Thyroid gland (tissue), 4 donors: ENCODE measurements at regions of chr4 and their contacts with region 1.

Region 1: DNA sequence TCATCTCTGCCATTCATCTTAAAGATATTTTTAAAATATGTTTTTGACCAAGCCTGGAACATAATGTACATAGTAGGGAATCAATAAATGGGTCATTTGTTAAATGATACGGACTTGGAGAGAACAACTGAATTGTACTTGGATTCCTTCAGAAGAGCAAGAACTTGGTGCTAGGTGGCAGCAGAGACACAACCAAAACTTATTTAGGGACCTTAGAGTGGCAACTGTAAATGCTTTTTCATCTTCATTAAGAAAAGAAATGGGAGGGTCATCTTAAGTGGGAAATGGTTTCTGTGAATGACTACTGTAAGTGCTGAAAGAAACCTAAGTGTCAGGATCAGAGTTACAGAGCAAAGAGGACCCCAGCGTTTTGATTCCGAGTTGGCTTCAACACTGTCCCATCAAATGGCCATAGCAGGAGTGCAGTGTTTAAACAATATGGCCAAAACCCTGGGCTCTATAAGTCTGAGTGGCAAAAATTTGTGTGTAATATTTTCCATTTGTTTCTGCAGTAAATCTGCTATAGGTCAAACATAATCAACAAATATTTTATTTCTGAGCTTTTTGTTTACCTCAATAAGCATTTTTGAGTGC is 213.6 kb downstream of the PALLD start:
- DNase-seq: peak; percentile 58 to 65
- H3K4me3 ChIP-seq: no peak overlapping the region
- H3K27ac ChIP-seq: peak overlapping the region; percentile 62 to 77 (median 69)
- H3K4me1 ChIP-seq: peaks cover 14 to 18% of the 10 kb centered on the region in 2 donors
- H3K27me3 ChIP-seq: no peaks in the 10 kb centered on the region
- CTCF ChIP-seq: peak in 4 of 6 experiments; percentile 57 to 82 (median 67)
- POLR2A ChIP-seq: no peak

Region 2: GRCh38 chr4:168765726-168766125 is 55.3 kb after region 1 on chr4:
- intact Hi-C with region 1: no loop called
- DNase-seq: peak; percentile 47 to 65
- H3K4me3 ChIP-seq: no peak overlapping the region
- H3K27ac ChIP-seq: peak overlapping the region in 1 of 3 donors; percentile 54
- H3K4me1 ChIP-seq: peaks cover 7 to 30% of the 10 kb centered on the region in 2 donors
- H3K27me3 ChIP-seq: no peaks in the 10 kb centered on the region
- CTCF ChIP-seq: no peak
- POLR2A ChIP-seq: no peak

Region 3: GRCh38 chr4:168831919-168832762 is 121.7 kb after region 1 on chr4:
- intact Hi-C with region 1: loop called (anchors 10 kb)
- DNase-seq: peak; percentile 86 to 88
- H3K4me3 ChIP-seq: peak overlapping the region; percentile 70 to 92 (median 91)
- H3K27ac ChIP-seq: peak overlapping the region; percentile 79 to 87 (median 86)
- H3K4me1 ChIP-seq: peaks cover 9 to 15% of the 10 kb centered on the region in 2 donors
- H3K27me3 ChIP-seq: no peaks in the 10 kb centered on the region
- CTCF ChIP-seq: peak in 1 of 6 experiments; percentile 18
- POLR2A ChIP-seq: peak; percentile 82 to 96